A673 (cell line): ENCODE measurements at regions of chr12 and their contacts with region 1.

Region 1: DNA sequence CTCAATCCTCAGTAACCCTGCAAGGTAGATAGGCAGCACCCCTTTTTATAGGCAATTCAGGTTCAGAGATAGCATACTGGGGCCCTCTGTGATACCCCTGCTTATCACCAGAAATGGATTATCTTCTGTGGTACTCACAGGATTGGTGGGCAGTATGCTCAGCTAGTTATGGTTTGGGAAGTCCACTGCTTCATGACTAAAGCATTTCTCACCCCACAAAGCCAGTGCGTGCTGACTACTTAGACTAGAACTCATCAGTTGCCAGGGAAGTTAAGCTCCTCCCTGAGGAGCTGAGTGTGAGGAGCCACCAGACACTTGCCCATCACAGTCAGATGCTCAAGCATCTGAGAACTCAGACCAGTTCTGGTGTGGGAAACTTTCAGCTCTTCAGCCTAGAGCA is 76.3 kb downstream of the SCAF11 start:
- DNase-seq: peak; percentile 28
- H3K4me3 ChIP-seq: no peak overlapping the region
- H3K27ac ChIP-seq: no peak overlapping the region
- H3K4me1 ChIP-seq: peaks cover 17% of the 10 kb centered on the region
- H3K27me3 ChIP-seq: no peaks in the 10 kb centered on the region
- CTCF ChIP-seq: no peak

Region 2: DNA sequence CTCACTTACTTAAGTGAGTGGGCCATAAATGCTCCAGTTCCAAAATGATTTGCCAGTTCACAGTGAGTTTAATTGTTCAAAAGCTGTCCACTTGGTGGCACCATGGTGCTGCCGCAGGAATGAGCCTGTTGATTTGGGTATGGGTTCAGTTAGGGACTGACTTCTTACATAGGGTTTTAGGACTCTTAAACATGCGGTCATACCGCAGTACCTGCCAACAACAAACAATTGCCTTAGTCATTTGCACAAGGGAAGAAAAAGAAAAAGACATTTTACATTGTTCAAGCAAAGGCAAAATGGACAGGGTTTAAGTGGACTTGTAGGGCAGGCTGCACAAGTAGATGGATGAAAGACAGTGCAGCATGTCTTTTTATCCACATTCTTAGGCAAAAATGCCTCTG is 783.2 kb before region 1 on chr12:
- CTCF ChIA-PET with region 1: no interaction called
- POLR2A ChIA-PET with region 1: no interaction called
- intact Hi-C with region 1: loop called (anchors 10 kb)
- DNase-seq: peak; percentile 84
- H3K4me3 ChIP-seq: no peak overlapping the region
- H3K27ac ChIP-seq: no peak overlapping the region
- H3K4me1 ChIP-seq: no peaks in the 10 kb centered on the region
- H3K27me3 ChIP-seq: no peaks in the 10 kb centered on the region
- CTCF ChIP-seq: peak; percentile 85

Region 3: GRCh38 chr12:45828402-45828801 is 85.7 kb before region 1 on chr12:
- CTCF ChIA-PET with region 1: no interaction called
- POLR2A ChIA-PET with region 1: no interaction called
- intact Hi-C with region 1: no loop called
- DNase-seq: no peak
- H3K4me3 ChIP-seq: no peak overlapping the region
- H3K27ac ChIP-seq: no peak overlapping the region
- H3K4me1 ChIP-seq: no peaks in the 10 kb centered on the region
- H3K27me3 ChIP-seq: no peaks in the 10 kb centered on the region
- CTCF ChIP-seq: no peak

Region 4: GRCh38 chr12:45863332-45863731 is 50.8 kb before region 1 on chr12:
- CTCF ChIA-PET with region 1: no interaction called
- POLR2A ChIA-PET with region 1: no interaction called
- intact Hi-C with region 1: no loop called
- DNase-seq: no peak
- H3K4me3 ChIP-seq: no peak overlapping the region
- H3K27ac ChIP-seq: no peak overlapping the region
- H3K4me1 ChIP-seq: no peaks in the 10 kb centered on the region
- H3K27me3 ChIP-seq: no peaks in the 10 kb centered on the region
- CTCF ChIP-seq: no peak